ENCODE measurements at regions of chr3 and their contacts with region 1.

Region 1: DNA sequence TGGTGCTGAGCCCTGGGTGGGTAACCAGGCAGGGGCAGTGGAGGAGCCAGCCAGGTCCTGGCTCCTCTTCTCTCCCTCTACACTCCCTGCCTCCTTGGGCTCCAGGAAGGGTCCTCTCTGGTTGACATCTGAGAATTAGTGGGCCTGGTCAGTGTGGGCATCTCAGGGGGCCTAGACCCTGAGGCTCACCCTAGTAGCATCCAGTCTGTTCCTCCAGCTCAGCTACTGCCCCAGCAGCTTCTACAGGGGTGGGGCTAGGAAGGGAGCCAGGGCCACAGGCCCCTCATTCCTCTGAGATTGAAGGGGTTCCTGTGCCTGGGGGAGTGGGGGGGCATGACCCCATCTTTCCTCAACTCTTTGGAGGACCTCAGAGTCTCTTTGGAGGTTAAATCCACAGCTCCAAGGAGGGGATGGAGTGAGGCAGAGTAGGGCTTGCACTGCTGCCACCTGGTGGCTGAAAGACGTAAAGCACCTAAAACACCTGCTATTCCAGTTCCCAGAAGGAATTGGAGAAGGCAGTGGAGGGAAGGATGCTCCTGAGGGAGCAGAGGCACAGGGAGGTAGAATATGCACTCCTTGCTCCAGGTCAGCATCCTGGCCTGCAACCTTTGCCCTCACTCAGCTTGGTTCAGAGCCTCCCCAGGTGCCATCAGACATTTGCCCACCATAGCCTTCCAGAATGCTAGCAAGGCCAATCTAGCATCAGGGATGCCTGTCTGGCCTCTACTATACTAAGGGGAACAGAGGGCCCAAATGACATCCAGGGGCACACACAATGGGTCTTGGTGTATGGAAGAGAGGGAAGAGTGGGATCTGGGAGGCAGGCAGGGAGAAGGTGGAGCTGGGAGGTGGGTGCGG is 25.1 kb downstream of the C3orf18 start:
- DNase-seq: no peak

Region 2: DNA sequence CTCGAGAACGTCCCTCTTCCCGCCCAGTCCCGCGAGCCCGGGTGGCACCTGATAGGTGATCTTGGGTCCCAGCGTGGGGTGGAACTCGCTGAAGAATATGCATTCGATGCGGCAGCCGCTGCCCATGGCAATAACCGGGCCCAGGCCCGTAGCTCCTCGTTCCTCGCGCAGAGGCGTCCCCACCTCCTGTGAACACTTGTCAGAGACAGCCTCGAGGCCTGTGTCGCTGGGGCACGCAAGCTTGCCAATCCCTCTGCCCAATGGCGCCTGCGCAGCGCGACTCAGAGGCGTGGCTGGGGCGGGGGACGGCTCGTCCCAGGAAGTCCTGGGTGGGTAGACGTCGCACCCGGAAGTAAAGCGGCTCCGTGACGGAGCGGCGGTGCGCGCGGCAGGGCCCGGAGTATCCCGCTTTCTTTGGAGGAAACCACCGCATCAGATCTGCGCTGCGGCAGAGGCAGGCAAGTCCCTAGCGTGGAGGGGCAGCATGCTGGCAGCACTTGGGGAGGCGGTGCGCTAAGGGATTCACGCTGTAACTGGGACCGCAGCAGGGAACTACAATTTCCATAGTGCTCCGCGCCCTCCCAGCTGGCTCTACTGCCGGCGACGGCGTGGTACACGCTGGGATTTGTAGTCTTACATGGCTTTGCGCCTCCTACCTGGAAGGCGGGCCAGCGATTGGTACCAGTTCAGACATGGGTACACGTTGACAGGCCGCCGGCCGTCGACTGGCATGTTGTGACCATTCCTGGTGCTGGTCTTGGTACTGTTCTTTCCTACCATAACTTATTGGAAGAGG is 191.7 kb before region 1 on chr3 and contains the starts of genes CYB561D2 and NPRL2:
- intact Hi-C with region 1: loop called (anchors 2 kb)
- DNase-seq: peak; percentile 100
- total RNA-seq, gene CYB561D2: 6.4 TPM
- total RNA-seq, gene NPRL2: 19.1 TPM

Region 3: DNA sequence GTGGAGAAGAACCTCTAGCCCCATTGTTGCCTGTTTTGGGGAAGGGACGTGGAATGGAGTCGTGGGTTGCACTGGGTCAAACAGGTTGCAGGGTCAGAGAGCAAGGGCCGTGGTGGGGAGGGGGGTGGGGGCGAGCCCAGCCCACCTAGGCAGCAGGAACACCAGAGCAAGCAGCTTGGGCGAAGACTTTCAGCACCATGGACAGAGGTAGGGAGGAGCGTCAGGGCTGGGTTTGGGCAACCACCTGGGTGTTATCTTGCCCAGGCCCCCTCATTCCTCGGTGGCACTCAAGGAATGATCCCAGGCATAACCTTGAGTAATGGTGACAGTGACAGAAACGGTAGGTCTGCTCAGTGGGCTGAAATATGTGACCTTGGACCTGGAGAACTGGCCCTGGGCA is 137.2 kb before region 1 on chr3:
- intact Hi-C with region 1: no loop called
- DNase-seq: no peak

Region 4: DNA sequence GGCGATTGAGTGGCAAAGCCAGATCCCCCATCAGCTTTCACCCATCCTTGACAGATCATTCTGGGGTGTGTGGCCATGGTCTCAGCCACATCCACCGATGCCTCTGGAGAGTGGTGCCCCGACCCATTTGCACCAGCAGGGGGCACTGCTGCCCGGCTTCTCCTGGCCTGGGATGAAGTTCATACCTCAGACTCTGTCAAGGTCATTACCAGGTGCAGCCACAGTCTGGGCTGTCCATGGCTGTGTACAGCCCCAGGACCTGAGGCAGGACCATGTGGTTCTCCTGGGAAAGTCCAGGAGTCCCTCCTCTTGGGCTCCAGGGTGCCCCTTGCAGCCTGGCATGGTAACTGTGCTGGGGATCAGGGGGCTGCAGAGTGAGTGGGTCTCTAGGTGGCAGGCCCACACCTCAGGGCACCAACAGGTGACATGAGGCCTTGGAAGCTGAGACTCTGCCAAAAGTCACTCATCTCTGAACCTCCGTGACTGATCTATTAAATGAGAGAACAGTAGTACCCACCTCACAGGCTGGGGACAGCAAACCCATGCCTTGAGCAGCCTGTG is 106.2 kb before region 1 on chr3:
- intact Hi-C with region 1: loop called (anchors 1 kb)
- DNase-seq: peak; percentile 82

Region 5: GRCh38 chr3:50503504-50504342 is 38.7 kb before region 1 on chr3 and contains the start of gene CACNA2D2:
- intact Hi-C with region 1: no loop called
- DNase-seq: peak; percentile 81
- total RNA-seq, gene CACNA2D2: 1.4 TPM